GM12878 (cell line): ENCODE measurements at regions of chr3 and their contacts with region 1.

Region 1: GRCh38 chr3:12484198-12484974 is at the start of gene TSEN2:
- DNase-seq: peak; percentile 88
- ATAC-seq: peak; percentile 96
- H3K4me3 ChIP-seq: peak within 1 kb of the TSS; percentile 95
- H3K27ac ChIP-seq: peak within 1 kb of the TSS; percentile 69
- H3K4me1 ChIP-seq: peaks cover 5% of the 10 kb centered on the region; the same call in 1 of the 2 replicates
- H3K27me3 ChIP-seq: no peaks in the 10 kb centered on the region
- CTCF ChIP-seq: peak in 1 of 3 experiments; percentile 65; a peak in 2 of 6 replicates
- EP300 ChIP-seq: no peak
- POLR2A ChIP-seq: peak; percentile 92
- RAD21 ChIP-seq: peak; percentile 38; the same call in 1 of the 2 replicates
- polyA plus RNA-seq, gene TSEN2: 24.5 TPM

Region 2: DNA sequence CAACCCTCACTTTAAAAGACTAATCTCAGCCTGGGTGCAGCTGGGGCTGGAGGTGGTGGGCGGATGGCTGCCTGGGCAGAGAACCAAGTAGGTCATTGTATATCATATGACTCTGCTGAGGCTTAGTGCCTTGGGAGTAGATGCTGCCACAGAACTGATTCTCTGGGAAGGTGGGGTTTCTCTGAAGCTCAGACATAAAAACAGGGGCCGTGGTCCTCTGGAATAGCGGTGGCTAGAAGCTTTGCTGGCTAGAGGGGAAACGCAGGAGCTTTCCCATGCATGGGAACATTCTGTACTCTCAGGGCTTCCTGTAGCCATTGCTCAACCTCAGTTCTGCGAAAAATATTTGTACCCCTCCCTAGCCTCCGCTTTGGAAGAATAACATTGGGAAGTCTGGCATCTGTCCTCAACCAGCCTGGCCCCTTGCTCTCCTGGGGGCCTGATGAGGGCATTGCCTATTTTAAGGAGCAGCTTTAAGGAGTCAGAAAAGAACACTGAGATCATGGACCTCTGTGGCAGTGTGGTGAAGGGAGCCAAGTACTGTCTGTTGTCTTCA is 340.4 kb before region 1 on chr3:
- CTCF ChIA-PET with region 1: interaction called, 255 read pairs
- POLR2A ChIA-PET with region 1: interaction called, 6 read pairs
- RAD21 ChIA-PET with region 1: interaction called, 139 read pairs
- SMC1A ChIA-PET with region 1: interaction called, 187 read pairs
- in situ Hi-C with region 1: loop called (anchors 5 kb)
- intact Hi-C with region 1: loop called (anchors 1 kb)
- DNase-seq: no peak
- ATAC-seq: no peak
- H3K4me3 ChIP-seq: no peak overlapping the region
- H3K27ac ChIP-seq: no peak overlapping the region
- H3K4me1 ChIP-seq: peaks cover 11% of the 10 kb centered on the region
- H3K27me3 ChIP-seq: no peaks in the 10 kb centered on the region; a peak in 1 of 4 replicates
- CTCF ChIP-seq: no peak
- EP300 ChIP-seq: no peak
- POLR2A ChIP-seq: no peak
- RAD21 ChIP-seq: no peak

Region 3: GRCh38 chr3:12187448-12188327 is 296.7 kb before region 1 on chr3:
- CTCF ChIA-PET with region 1: interaction called, 12 read pairs
- POLR2A ChIA-PET with region 1: no interaction called
- RAD21 ChIA-PET with region 1: interaction called, 6 read pairs
- SMC1A ChIA-PET with region 1: interaction called, 13 read pairs
- in situ Hi-C with region 1: no loop called
- intact Hi-C with region 1: loop called (anchors 5 kb)
- DNase-seq: peak; percentile 61
- ATAC-seq: peak; percentile 92
- H3K4me3 ChIP-seq: no peak overlapping the region
- H3K27ac ChIP-seq: peak overlapping the region; percentile 47
- H3K4me1 ChIP-seq: peaks cover 20% of the 10 kb centered on the region
- H3K27me3 ChIP-seq: no peaks in the 10 kb centered on the region
- CTCF ChIP-seq: no peak
- EP300 ChIP-seq: peak; percentile 32 to 60; a peak in 2 of 4 replicates
- POLR2A ChIP-seq: no peak
- RAD21 ChIP-seq: no peak

Region 4: GRCh38 chr3:12294885-12295580 is 189.4 kb before region 1 on chr3:
- CTCF ChIA-PET with region 1: interaction called, 3 read pairs
- POLR2A ChIA-PET with region 1: no interaction called
- RAD21 ChIA-PET with region 1: no interaction called
- SMC1A ChIA-PET with region 1: no interaction called
- in situ Hi-C with region 1: no loop called
- intact Hi-C with region 1: loop called (anchors 10 kb)
- DNase-seq: no peak
- ATAC-seq: no peak
- H3K4me3 ChIP-seq: no peak overlapping the region
- H3K27ac ChIP-seq: no peak overlapping the region
- H3K4me1 ChIP-seq: no peaks in the 10 kb centered on the region
- H3K27me3 ChIP-seq: no peaks in the 10 kb centered on the region
- CTCF ChIP-seq: no peak
- EP300 ChIP-seq: no peak
- POLR2A ChIP-seq: no peak
- RAD21 ChIP-seq: no peak

Region 5: DNA sequence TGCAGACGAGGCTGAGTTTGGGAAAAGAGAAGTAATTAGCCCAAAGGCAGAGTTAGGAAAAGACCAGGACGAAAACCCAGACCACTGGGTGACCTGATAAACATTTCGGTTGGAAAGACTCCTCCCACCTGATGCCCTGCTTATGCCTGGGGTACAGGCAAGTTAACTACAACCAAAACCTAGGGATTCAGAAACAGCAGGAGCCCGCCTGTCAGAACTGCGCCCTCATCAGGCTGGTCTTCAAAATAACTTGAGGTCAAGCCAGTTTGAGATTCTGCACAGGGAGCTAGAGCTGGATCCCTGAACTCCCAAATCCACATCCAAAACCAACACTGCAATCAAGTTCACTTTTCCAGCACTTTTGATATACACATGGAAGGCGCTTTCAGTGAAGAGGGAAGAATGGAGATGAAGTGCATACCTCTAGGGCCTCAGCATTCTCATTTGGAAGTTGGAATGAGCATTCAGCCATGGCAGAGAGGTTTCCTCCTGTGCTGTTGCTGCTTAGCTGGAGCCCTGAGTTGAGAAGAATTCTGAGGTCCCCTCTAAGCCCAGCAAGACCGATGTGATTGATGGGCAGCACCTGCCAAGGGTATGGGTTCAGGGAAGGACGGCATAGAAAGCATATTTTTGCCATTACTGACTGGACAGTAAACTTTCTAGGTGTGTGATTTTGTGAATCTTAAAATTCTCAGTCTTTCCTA is 11.5 kb after region 1 on chr3:
- CTCF ChIA-PET with region 1: interaction called, 12 read pairs
- POLR2A ChIA-PET with region 1: no interaction called
- RAD21 ChIA-PET with region 1: interaction called, 3 read pairs
- SMC1A ChIA-PET with region 1: interaction called, 6 read pairs
- in situ Hi-C with region 1: no loop called
- intact Hi-C with region 1: no loop called
- DNase-seq: no peak
- ATAC-seq: no peak
- H3K4me3 ChIP-seq: no peak overlapping the region
- H3K27ac ChIP-seq: no peak overlapping the region
- H3K4me1 ChIP-seq: no peaks in the 10 kb centered on the region
- H3K27me3 ChIP-seq: no peaks in the 10 kb centered on the region
- CTCF ChIP-seq: 0 out of 6 replicates have a peak, but pooled peaks of 1 of the 3 experiments have one; percentile 14
- EP300 ChIP-seq: no peak
- POLR2A ChIP-seq: no peak
- RAD21 ChIP-seq: no peak

Region 6: DNA sequence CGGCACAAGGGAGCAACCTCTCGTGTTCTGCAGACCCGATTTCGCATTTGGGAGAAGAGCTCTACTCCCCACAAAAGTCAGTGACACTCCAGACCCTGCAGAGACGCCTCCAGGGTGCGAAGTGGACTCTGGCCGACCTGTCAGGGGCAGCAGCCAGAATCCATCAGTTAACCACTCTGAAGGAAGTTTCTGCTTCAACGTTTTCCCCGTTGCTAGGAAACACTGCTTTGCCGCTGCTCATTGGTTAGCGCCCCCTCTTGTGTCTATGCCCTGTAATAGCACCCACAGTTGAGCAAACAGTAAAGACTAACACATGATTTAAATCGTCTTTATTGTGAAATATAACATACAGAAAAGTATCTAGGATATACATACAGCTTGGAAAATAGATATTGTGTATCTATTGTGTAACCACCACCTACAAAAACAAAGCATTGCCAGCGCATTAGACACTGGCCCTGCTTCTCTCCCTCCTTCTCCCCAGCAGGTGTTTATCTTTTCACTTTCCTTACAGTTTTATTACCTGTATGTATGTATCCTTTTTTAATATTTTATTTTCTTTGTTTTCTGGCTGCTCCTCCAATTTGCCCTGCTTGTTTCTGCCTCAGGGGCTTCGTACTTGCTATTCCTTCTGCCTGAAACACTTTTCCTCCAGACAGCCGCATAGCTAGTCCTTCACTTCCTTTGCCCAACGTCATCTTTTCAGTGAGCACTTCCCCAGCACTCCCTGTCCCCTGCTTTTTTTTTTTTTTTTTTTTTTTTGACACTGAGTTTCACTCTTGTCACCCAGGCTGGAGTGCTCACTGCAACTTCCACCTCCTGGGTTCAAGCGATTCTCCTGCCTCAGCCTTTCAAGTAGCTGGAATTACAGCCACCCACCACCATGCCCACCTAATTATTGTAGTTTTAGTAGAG is 235.9 kb after region 1 on chr3:
- CTCF ChIA-PET with region 1: interaction called, 7 read pairs
- POLR2A ChIA-PET with region 1: no interaction called
- RAD21 ChIA-PET with region 1: interaction called, 7 read pairs
- SMC1A ChIA-PET with region 1: no interaction called
- in situ Hi-C with region 1: no loop called
- intact Hi-C with region 1: loop called (anchors 1 kb)
- DNase-seq: no peak
- ATAC-seq: peak; percentile 96
- H3K4me3 ChIP-seq: no peak overlapping the region
- H3K27ac ChIP-seq: no peak overlapping the region
- H3K4me1 ChIP-seq: no peaks in the 10 kb centered on the region
- H3K27me3 ChIP-seq: no peaks in the 10 kb centered on the region
- CTCF ChIP-seq: peak; percentile 90 to 96 (median 95); a peak in 5 of 6 replicates
- EP300 ChIP-seq: no peak; a peak in 1 of 4 replicates
- POLR2A ChIP-seq: no peak
- RAD21 ChIP-seq: peak; percentile 84